ENCODE measurements at regions of chr21 and their contacts with region 1.

Region 1: DNA sequence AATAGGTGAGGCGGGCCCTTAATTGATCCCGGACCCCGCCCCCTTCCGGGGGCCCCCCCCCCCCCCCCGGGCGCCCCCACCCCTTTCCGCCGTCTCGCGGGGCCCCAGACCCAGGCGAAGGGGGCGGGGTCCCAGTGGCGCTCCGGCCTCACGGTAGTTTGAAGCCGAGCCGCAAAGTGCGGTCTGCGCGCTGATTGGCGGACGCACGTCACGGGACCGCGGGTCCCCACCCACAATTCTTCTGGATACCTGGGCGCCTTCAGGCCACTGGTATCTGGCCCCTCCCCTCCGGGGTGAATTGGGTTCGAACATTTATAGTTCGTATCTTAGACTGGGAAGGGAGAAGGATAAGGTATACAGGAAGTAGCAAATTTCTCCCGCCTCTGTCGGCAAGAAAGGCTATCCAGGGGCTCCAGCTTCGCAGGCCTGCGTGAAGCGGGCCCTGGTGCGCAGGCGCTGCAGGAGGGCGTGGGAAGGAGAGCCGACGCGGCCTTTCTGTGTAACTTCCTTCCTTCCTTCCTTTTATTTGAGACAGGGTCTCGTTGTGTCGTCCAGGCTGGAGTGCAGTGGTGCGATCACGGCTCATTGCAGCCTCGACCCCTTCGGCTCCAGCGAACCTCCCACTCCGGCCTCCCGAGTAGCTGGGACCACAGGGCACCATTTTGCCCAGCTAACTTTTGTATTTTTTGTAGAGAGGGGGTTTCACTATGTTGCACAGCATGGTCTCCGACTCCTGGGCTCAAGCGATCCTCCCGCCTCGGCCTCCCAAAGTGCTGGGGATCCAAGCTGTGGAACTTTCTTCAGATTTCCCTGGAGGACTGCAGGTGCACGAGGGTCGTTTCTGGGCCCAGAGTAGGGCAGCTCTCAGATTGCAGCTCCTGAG is 564 bp upstream of the HMGN1 start:
- DNase-seq: peak; percentile 98
- ATAC-seq: peak; percentile 89
- H3K4me3 Mint-ChIP-seq: peak overlapping the region; percentile 94
- H3K27ac Mint-ChIP-seq: peak overlapping the region; percentile 99
- H3K4me1 Mint-ChIP-seq: peaks cover 45% of the 10 kb centered on the region
- H3K27me3 Mint-ChIP-seq: no peaks in the 10 kb centered on the region
- CTCF ChIP-seq: no peak

Region 2: DNA sequence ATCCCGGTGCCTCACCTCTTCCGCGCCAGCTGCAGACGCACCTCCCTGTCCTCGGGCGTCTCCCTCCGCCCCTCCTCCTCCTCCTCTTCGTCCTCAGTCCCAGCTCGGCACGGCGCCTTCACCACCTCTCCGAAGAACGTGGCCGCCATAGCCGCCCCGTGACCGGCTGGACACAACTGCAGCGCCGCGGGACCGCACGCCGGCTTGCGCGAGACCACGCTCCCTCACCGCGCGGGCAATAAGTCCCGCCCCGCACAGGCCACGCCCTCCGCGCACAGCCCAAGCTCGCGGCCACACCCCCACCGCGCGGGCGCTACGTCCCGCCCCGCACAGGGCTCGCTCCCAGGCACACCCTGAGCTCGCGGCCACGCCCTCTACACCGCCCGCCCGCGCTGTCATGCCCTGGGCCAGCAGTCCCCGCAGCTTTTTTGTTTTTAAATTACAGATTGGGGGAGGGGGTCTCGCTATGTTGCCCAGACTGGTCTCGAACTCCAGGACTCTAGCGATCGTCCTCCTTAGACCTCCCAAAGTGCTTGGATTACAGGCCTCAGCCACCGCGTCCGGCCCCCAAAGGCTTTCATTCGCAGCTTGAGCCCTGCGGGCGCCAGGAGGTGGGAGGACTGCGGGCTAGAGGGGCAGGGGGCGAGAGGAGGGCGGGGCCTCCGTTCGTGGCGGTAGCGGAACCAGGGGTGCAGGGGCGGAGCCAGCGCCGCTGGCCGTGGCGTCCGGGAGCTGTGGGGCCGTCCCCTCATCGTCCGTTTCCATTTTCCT is 166.0 kb before region 1 on chr21 and contains the start of gene PSMG1:
- CTCF ChIA-PET with region 1: no interaction called
- POLR2A ChIA-PET with region 1: interaction called, 11 read pairs
- DNase-seq: peak; percentile 96
- ATAC-seq: peak; percentile 93
- H3K4me3 Mint-ChIP-seq: peak within 1 kb of the TSS; percentile 92
- H3K27ac Mint-ChIP-seq: peak within 1 kb of the TSS; percentile 95
- H3K4me1 Mint-ChIP-seq: peaks cover 39% of the 10 kb centered on the region
- H3K27me3 Mint-ChIP-seq: no peaks in the 10 kb centered on the region
- CTCF ChIP-seq: no peak
- total RNA-seq, gene PSMG1: 64.0 to 70.4 TPM (median 68.6 TPM) in 3 replicates

Region 3: GRCh38 chr21:39307466-39307865 is 42.0 kb before region 1 on chr21:
- CTCF ChIA-PET with region 1: no interaction called
- POLR2A ChIA-PET with region 1: interaction called, 10 read pairs
- DNase-seq: no peak
- ATAC-seq: no peak
- H3K4me3 Mint-ChIP-seq: no peak overlapping the region
- H3K27ac Mint-ChIP-seq: peak overlapping the region; percentile 5; the same call in 1 of the 2 replicates
- H3K4me1 Mint-ChIP-seq: peaks cover 6% of the 10 kb centered on the region
- H3K27me3 Mint-ChIP-seq: no peaks in the 10 kb centered on the region
- CTCF ChIP-seq: no peak

Region 4: DNA sequence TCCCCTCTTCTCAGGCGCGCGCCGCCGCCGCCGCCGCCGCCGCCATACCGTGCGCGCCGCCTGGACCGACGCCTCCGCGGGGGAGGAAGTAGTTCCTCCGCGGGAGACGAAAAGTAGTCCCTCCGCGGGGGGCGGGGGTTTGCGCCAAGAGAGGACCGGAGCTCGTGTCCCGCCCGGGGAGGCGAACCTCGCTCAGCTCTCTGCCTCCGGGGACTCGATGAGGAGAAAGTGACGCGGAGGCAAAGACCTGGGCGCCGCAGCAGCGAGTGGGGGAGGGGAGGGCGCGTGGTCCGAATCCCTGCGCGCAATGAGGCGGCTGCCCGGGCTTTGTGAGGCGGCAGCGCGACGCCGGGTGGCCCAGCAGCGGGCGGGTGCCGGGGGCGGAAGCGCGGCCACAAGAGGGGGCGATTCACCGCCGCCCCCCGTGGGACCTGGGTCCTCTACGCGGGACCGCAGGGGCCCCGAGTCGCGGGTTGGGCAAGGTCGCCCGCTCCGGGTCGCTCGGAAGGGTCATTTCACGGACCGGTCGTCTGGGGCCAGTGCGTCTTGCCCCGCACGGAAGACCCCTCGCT is 35.8 kb before region 1 on chr21 and contains the start of gene BRWD1:
- CTCF ChIA-PET with region 1: no interaction called
- POLR2A ChIA-PET with region 1: interaction called, 10 read pairs
- DNase-seq: peak; percentile 75
- ATAC-seq: peak; percentile 18
- H3K4me3 Mint-ChIP-seq: peak within 1 kb of the TSS; percentile 91
- H3K27ac Mint-ChIP-seq: peak within 1 kb of the TSS; percentile 98
- H3K4me1 Mint-ChIP-seq: peaks cover 13% of the 10 kb centered on the region
- H3K27me3 Mint-ChIP-seq: no peaks in the 10 kb centered on the region
- CTCF ChIP-seq: no peak
- total RNA-seq, gene BRWD1: 48.8 to 53.3 TPM (median 52.5 TPM) in 3 replicates

Region 5: GRCh38 chr21:39379986-39380891 is 30.8 kb after region 1 on chr21:
- CTCF ChIA-PET with region 1: interaction called, 3 read pairs
- POLR2A ChIA-PET with region 1: interaction called, 16 read pairs
- DNase-seq: peak; percentile 95
- ATAC-seq: peak; percentile 97
- H3K4me3 Mint-ChIP-seq: peak overlapping the region; percentile 88
- H3K27ac Mint-ChIP-seq: peak overlapping the region; percentile 84
- H3K4me1 Mint-ChIP-seq: peaks cover 24% of the 10 kb centered on the region
- H3K27me3 Mint-ChIP-seq: no peaks in the 10 kb centered on the region
- CTCF ChIP-seq: no peak

Region 6: DNA sequence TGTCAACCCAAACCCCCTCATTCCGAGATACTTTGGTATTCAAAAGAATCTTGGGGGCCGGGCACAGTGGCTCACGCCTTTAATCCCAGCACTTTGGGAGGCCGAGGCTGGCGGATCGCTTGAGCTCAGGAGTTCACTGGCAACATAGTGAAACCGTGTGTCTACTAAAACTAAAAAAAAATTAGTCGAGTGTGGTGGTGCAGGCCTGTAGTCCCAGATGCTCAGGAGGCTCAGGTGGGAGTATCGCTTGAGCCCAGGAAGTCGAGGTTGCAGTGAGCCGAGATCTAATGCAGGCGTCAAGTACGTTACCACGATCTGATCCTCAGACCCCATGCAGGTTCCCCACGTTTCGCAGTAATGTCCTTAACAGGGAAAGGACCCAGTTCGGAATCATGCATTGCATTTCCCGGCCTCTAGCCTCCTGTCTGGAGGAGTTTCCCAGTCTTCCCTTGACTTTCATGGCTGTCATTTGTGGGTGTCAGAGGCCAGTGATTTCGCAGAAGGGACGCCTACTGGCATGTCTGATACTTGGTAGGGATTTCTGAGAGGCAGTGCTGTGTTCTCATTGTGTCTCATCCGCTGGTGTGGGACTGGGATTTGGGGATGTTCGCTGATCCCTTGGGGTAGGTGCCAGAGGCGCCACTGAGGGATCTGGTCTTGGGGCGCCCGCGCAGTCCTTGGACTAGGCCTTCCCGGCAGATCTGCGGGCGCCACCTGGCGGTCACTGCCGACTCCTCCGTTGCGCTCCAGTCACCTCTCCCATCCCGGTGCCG is 38.8 kb after region 1 on chr21:
- CTCF ChIA-PET with region 1: interaction called, 13 read pairs
- POLR2A ChIA-PET with region 1: interaction called, 17 read pairs
- DNase-seq: peak; percentile 98
- ATAC-seq: peak; percentile 90
- H3K4me3 Mint-ChIP-seq: peak overlapping the region; percentile 70
- H3K27ac Mint-ChIP-seq: peak overlapping the region; percentile 95
- H3K4me1 Mint-ChIP-seq: peaks cover 24% of the 10 kb centered on the region
- H3K27me3 Mint-ChIP-seq: no peaks in the 10 kb centered on the region
- CTCF ChIP-seq: peak; percentile 88